Esophagus muscularis mucosa (tissue), 4 donors: ENCODE measurements at regions of chr17 and their contacts with region 1.

Region 1: DNA sequence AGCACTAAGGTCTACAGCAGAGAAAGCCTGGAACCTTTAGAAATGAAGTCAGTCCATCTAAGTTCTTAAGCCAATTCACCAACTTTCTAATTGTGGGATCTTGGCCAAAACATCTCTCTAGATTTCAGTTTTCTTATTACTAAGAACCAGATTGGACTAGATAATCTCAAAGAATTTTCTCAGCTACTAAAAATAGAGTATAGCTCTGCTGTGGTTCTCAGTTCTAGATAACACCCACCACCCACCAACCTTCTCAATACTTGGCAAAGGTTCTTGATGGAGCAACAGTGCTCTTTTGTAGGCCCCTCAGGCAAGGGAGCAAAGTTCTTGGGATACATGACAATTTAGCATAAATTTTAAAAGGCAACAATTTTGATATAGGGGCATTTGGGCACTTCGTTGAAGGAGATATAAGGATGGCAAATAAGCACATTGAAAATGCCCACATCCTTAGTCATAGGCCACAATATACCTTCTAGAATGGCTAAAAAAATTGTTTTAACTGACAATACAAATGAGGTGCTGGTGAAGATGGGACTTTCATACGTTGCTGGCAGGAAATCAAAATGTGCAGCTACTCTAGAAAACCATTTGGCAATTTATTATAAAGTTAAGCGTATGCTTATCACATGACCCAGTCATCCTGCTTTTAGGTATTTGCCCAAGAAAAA is 74.4 kb upstream of the TMEM132E start:
- DNase-seq: no peak
- H3K4me3 ChIP-seq: no peak overlapping the region
- H3K27ac ChIP-seq: no peak overlapping the region
- H3K4me1 ChIP-seq: no peaks in the 10 kb centered on the region
- H3K27me3 ChIP-seq: peaks cover 0 to 44% (median 0%) of the 10 kb centered on the region in 4 donors
- CTCF ChIP-seq: no peak
- EP300 ChIP-seq: no peak
- POLR2A ChIP-seq: no peak

Region 2: DNA sequence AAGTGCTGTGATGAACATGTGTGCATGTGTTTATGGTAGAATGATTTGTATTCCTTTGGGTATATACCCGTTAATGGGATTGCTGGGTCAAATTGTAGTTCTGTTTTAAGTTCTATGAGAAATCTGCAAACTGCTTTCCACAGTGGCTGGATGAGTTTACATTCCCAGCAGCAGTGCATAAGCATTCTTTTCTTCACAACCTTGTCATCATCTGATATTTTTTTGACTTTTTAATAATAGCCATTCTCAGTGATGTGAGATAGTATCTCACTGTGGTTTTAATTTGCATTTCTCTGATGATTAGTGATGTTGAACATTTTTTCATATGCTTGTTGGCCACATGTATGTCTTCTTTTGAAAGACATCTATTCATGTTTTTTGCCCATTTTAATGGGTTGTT is 167.2 kb before region 1 on chr17:
- intact Hi-C with region 1: no loop called
- DNase-seq: no peak
- H3K4me3 ChIP-seq: no peak overlapping the region
- H3K27ac ChIP-seq: no peak overlapping the region
- H3K4me1 ChIP-seq: no peaks in the 10 kb centered on the region
- H3K27me3 ChIP-seq: no peaks in the 10 kb centered on the region
- CTCF ChIP-seq: no peak
- EP300 ChIP-seq: no peak
- POLR2A ChIP-seq: no peak

Region 3: GRCh38 chr17:34465789-34466188 is 39.2 kb before region 1 on chr17:
- intact Hi-C with region 1: loop called (anchors 5 kb)
- DNase-seq: no peak
- H3K4me3 ChIP-seq: no peak overlapping the region
- H3K27ac ChIP-seq: no peak overlapping the region
- H3K4me1 ChIP-seq: no peaks in the 10 kb centered on the region
- H3K27me3 ChIP-seq: peaks cover 0 to 52% (median 0%) of the 10 kb centered on the region in 4 donors
- CTCF ChIP-seq: no peak
- EP300 ChIP-seq: no peak
- POLR2A ChIP-seq: no peak

Region 4: DNA sequence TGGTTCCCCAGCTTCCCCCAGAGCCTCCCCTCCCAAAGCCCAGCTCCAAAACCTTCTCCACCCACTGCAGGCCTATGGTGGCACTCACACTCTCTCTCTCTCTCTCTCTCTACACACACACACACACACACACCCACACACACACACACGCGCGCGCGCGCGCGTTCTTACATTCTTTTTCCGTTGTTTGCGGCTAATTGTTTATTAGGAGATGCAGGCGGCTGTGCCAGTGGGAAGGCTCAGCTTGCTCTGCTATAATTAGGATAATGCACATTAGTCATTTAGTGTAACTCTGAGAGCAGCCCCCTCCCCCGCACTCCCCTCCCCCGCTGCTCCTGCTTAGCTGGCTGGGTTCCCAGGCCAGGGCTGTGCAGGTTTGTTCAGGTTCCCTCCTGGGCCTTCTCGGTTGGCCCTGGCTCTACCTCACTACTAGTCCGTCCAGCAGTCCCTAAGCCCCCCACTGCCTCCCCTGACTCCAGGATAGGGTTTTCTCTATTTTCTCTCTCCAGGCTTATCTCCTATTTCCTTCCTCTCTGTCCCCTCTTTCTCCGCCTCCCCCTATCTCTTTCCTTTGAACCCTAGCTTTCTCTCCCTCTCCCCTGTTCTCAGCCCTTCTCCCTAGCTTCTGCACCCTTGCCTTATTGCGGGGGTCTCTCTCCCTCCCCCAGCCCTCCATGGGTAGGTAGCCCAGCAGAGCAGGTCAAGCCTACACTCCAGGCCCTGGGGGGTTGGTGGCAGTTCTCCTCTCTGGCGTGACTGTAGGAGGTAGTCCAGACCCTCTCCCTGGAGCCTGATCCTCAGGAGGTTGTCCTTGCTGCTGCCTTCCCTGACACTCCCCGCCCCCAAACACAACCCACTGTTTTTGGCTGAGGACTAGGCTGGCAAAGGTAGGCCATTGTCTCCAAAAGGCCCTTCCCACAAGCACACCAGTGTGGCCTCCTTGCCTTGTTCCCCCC is 108.4 kb after region 1 on chr17:
- intact Hi-C with region 1: no loop called
- DNase-seq: no peak
- H3K4me3 ChIP-seq: no peak overlapping the region
- H3K27ac ChIP-seq: no peak overlapping the region
- H3K4me1 ChIP-seq: peaks cover 0 to 7% (median 4%) of the 10 kb centered on the region in 4 donors
- H3K27me3 ChIP-seq: peaks cover 0 to 75% (median 5%) of the 10 kb centered on the region in 4 donors
- CTCF ChIP-seq: no peak
- EP300 ChIP-seq: no peak
- POLR2A ChIP-seq: no peak